Heart right ventricle (tissue), 16 donors: ENCODE measurements at regions of chr11 and their contacts with region 1.

Region 1: DNA sequence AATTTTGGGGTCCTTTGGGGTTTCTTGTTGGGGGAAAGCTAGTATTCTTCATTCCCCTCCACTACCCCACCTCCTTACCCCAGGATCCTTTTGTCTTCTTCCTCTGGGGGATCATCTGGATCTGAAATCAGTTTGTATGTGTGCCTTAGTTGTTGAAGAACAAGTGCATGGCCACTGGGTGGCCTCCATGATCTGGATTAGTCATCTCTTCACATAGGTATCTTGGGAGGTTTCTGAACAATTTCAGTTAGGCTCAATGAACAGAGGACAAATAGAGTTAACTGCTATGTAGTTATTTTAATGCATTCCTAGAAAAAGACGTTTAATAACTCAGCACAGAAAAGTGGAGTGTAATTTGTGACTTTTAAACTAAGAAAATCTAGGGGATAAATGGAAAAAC is 7.1 kb upstream of the VWA5A start:
- DNase-seq: no peak
- ATAC-seq: no peak
- H3K4me3 ChIP-seq: no peak overlapping the region
- H3K27ac ChIP-seq: no peak overlapping the region
- H3K4me1 ChIP-seq: peaks cover 0 to 9% (median 0%) of the 10 kb centered on the region in 9 donors
- H3K27me3 ChIP-seq: peaks cover 0 to 11% (median 0%) of the 10 kb centered on the region in 7 donors
- CTCF ChIP-seq: peak in 1 of 9 donors; percentile 22

Region 2: DNA sequence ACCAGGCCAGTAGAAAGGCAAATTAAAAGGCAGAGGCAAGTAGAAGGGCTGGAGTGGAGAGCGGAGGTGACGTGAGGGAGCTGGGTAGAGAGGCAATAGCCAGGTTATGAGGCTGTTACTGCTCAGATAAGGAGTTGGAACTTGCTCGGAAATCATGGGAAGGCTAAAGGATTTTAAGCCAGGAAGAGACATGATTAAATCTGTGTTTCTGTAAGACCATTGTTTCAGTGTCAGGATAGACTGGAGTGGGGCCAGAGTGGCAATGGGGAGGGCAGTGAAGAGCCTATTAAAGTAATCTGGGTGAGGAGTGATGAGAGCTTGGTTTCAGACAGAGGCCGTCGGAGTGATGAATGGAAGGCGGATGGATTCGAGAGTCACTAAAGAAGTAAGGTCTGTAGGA is 639.1 kb before region 1 on chr11:
- intact Hi-C with region 1: loop called in 1 of 10 experiments (anchors 5 kb)
- DNase-seq: peak; percentile 22 to 36
- ATAC-seq: peak; percentile 50 to 88 (median 67)
- H3K4me3 ChIP-seq: no peak overlapping the region
- H3K27ac ChIP-seq: peak overlapping the region in 7 of 10 donors; percentile 30 to 68 (median 62)
- H3K4me1 ChIP-seq: peaks cover 0 to 54% (median 9%) of the 10 kb centered on the region in 9 donors
- H3K27me3 ChIP-seq: no peaks in the 10 kb centered on the region
- CTCF ChIP-seq: no peak

Region 3: DNA sequence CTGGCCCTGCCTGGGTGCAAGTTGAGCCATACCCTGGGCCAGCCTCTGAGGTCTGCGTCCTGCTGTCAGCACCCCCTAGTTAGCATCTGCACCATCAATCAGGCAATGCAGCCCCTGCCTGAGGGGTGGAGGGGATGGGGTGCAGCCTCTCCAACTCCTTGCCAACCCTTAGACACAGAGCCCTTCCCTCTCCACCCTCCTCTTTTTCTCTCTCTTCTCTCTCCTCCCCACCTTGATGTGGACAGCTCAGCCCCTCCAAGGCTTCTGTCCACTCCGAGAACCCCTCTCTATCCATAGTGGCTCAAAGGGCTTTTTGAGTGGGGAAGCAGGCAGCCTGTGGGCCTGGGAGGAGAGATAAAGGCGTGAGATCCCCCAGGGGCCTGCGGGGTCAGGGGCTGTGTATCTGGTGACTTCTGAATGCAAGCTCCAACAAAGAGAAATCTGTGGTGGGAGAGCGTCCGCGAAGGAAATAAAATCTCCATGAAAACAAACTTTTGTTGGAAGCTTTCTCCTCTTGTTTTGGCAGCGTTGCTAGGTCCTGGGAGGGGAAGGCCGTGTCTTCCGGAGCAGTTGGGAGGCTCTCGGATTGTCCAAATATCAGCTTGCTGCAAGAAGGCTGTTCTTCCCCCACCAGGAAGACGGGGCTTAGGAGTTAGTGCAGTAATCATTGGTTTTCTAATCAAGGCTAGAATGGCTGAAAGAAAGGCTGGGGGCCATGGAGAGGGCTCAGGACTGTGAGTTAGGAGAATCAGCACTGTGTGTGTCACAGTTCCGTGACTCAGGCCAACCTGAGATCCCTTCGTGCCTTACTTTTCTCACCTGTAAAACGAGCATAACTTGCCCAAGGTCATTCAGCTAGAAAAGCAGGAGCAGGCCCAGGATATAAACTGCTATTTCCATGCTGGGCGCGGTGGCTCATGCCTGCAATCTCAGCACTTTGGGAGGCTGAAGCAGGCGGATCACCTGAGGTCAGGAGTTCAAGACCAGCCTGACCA is 1106.7 kb after region 1 on chr11:
- intact Hi-C with region 1: no loop called
- DNase-seq: peak; percentile 58 to 72
- ATAC-seq: peak; percentile 61 to 92 (median 81)
- H3K4me3 ChIP-seq: no peak overlapping the region
- H3K27ac ChIP-seq: peak overlapping the region in 8 of 10 donors; percentile 46 to 75 (median 62)
- H3K4me1 ChIP-seq: peaks cover 0 to 52% (median 27%) of the 10 kb centered on the region in 9 donors
- H3K27me3 ChIP-seq: no peaks in the 10 kb centered on the region
- CTCF ChIP-seq: no peak